ENCODE measurements at regions of chr10 and their contacts with region 1.

Region 1: GRCh38 chr10:113678690-113679462 is 836 bp upstream of the CASP7 start:
- DNase-seq: peak; percentile 46
- H3K4me3 ChIP-seq: peak overlapping the region; percentile 82
- H3K27me3 ChIP-seq: no peaks in the 10 kb centered on the region
- CTCF ChIP-seq: peak; percentile 85

Region 2: DNA sequence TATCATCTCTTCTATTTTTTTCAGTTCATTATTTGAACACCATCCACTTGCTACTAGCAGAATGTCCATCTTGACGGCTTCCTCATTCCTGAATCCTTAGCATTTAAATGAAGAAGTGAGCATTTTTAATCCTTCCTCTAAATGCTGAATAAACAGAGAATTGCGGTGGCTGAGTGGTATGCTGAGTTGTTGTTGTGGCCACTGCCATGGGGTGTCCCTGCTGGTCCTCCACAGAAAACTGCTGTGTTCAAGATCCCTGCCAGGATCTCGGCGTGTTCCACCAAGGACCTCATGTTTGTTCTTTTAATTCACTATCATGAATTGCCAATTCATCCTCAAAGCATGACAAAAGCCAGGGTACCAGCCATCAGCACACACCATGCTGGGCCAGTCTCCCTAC is 174.9 kb before region 1 on chr10:
- CTCF ChIA-PET with region 1: no interaction called
- POLR2A ChIA-PET with region 1: no interaction called
- DNase-seq: no peak
- H3K4me3 ChIP-seq: no peak overlapping the region
- H3K27me3 ChIP-seq: no peaks in the 10 kb centered on the region
- CTCF ChIP-seq: no peak

Region 3: DNA sequence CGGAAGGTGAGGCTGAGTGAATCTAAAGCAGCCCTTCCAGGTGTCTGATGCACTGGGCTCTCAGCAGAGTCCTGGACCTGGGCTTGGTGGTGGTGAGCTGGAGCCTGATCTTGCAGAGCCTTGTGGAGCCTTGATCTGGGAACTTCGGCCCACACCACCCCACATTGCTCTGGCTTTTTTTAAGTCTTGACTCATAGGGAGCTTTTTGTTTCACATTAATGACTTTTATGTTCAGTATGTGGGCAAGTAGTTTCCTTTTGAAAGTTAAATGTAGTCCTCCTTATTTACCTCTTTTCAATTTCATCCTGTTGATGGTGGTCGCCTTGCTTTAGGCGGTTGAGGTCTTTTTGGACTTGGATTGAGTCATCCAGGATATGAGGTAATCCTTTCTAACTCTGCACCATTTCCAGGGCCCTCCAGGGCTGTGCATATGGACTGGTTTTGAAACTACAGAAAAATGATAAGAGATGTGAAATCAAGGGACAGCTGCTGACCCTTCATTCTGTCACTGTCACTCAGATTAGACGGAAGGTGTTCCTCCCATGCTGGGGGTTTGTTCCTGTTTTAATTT is 12.1 kb before region 1 on chr10:
- CTCF ChIA-PET with region 1: interaction called, 13 read pairs
- POLR2A ChIA-PET with region 1: no interaction called
- DNase-seq: no peak
- H3K4me3 ChIP-seq: no peak overlapping the region
- H3K27me3 ChIP-seq: no peaks in the 10 kb centered on the region; the same call in 1 of the 2 replicates
- CTCF ChIP-seq: no peak

Region 4: GRCh38 chr10:113922787-113923570 is 244.1 kb after region 1 on chr10:
- CTCF ChIA-PET with region 1: no interaction called
- POLR2A ChIA-PET with region 1: no interaction called
- DNase-seq: no peak
- H3K4me3 ChIP-seq: no peak overlapping the region
- H3K27me3 ChIP-seq: no peaks in the 10 kb centered on the region
- CTCF ChIP-seq: no peak

Measured in BJ (cell line).